K562 (cell line): ENCODE measurements at regions of chr20 and their contacts with region 1.

Region 1: DNA sequence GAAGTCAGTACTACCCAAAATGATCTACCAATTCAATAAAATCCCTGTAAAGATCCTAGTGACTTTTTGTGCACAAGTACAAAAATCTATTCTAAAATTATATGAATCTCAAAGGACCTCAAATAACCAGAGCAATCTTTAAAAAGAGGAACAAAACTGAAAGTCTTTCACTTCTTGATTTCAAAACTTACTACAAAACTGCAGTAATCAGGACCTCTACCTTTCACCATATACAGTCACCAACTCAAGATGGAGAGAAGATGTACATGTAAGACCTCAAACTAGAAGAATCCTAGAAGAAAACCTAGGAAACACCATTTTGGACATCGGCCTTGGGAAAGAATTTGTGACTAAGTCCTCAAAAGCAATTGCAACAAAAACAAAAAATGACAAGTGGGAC is 109.5 kb upstream of the CD93 start:
- DNase-seq: no peak
- ATAC-seq: no peak
- H3K4me3 ChIP-seq: no peak overlapping the region
- H3K27ac ChIP-seq: no peak overlapping the region
- H3K4me1 ChIP-seq: peaks cover 6 to 10% of the 10 kb centered on the region in 2 experiments; a peak in 4 of 5 replicates
- H3K27me3 ChIP-seq: no peaks in the 10 kb centered on the region
- CTCF ChIP-seq: no peak
- EP300 ChIP-seq: no peak
- POLR2A ChIP-seq: no peak
- RAD21 ChIP-seq: no peak

Region 2: DNA sequence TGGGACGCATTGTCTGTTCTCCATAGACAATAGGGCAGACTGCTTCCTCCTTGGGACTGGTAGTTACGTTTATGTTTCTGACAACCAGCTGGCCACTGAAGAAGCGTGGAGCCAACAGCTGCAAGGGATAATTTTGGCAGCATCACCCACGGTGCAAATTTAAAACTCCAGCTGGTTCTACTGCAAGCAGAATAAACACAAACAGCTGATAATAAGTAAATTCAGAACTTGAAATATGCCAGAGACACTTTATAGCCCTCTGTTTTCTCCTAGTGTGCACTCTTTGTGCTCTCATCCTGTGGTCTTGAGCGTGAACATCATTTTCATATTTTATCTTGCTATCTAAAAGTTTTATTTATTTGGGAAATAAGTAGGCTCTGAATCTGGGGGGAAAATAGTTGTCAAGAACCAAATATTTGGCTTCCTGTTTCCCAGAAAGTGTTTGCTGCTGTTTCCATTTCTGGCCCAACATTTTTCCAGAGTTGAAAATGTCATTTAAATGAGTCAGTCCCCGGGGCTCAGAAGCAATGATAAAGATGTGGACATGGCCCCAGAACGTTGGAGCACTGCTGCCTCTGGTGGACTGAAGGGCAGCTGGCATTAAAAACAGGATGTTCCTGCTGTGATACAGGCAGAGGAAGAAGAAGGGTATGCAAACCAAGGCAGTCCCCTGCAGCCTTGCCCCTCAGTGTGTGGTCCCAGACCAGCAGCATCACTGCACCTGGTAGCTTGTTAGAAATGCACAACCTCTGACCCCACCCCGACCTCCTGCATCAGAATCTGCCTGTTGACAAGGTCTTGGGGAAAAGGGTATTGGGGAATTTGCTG is 133.7 kb before region 1 on chr20:
- CTCF ChIA-PET with region 1: no interaction called
- POLR2A ChIA-PET with region 1: no interaction called
- in situ Hi-C with region 1: loop called (anchors 5 kb)
- intact Hi-C with region 1: no loop called
- DNase-seq: peak in 1 of 4 experiments; percentile 65
- ATAC-seq: peak; percentile 85
- H3K4me3 ChIP-seq: no peak overlapping the region
- H3K27ac ChIP-seq: no peak overlapping the region
- H3K4me1 ChIP-seq: peaks cover 0 to 24% of the 10 kb centered on the region in 2 experiments; a peak in 2 of 5 replicates
- H3K27me3 ChIP-seq: no peaks in the 10 kb centered on the region
- CTCF ChIP-seq: peak; percentile 49 to 61 (median 59)
- EP300 ChIP-seq: no peak
- POLR2A ChIP-seq: no peak
- RAD21 ChIP-seq: peak; percentile 39 to 44; a peak in 3 of 4 replicates